ENCODE measurements at regions of chr9 and their contacts with region 1.

Region 1: GRCh38 chr9:37938121-37938891 is 34.4 kb upstream of the SLC25A51 start:
- DNase-seq: peak in 1 of 2 donors; percentile 45
- ATAC-seq: peak; percentile 48 to 75 (median 66)
- H3K4me3 ChIP-seq: peak overlapping the region in 2 of 10 donors; percentile 9 to 17
- H3K27ac ChIP-seq: peak overlapping the region in 9 of 10 donors; percentile 50 to 74 (median 60)
- H3K4me1 ChIP-seq: peaks cover 22 to 59% (median 47%) of the 10 kb centered on the region in 9 donors
- H3K27me3 ChIP-seq: no peaks in the 10 kb centered on the region
- CTCF ChIP-seq: no peak

Region 2: DNA sequence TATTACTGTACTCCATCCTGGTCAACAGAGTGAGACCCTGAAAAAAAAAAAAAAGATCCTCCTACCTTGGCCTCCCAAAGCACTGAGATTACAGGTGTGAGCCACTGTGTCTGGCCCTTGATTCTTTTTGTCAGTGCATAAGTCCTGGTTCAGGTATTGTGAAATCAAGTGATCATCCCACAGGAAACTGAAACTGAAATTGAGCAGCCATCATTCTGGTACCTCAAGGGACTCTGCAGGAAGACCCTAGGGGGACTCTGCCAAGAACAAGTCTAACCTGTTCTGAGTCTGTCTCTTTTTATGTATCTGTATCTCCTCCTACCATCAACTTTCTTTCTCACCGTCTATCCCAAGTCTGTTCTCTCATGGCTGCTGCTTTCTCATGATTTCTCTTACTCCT is 139.6 kb before region 1 on chr9:
- intact Hi-C with region 1: no loop called
- DNase-seq: no peak
- ATAC-seq: no peak
- H3K4me3 ChIP-seq: no peak overlapping the region
- H3K27ac ChIP-seq: no peak overlapping the region
- H3K4me1 ChIP-seq: peaks cover 8 to 36% (median 34%) of the 10 kb centered on the region in 9 donors
- H3K27me3 ChIP-seq: no peaks in the 10 kb centered on the region
- CTCF ChIP-seq: no peak

Region 3: GRCh38 chr9:37920471-37921167 is 17.7 kb before region 1 on chr9:
- intact Hi-C with region 1: loop called in 1 of 10 experiments (anchors 2 kb)
- DNase-seq: no peak
- ATAC-seq: no peak
- H3K4me3 ChIP-seq: no peak overlapping the region
- H3K27ac ChIP-seq: no peak overlapping the region
- H3K4me1 ChIP-seq: peaks cover 11 to 55% (median 23%) of the 10 kb centered on the region in 9 donors
- H3K27me3 ChIP-seq: no peaks in the 10 kb centered on the region
- CTCF ChIP-seq: no peak

Region 4: DNA sequence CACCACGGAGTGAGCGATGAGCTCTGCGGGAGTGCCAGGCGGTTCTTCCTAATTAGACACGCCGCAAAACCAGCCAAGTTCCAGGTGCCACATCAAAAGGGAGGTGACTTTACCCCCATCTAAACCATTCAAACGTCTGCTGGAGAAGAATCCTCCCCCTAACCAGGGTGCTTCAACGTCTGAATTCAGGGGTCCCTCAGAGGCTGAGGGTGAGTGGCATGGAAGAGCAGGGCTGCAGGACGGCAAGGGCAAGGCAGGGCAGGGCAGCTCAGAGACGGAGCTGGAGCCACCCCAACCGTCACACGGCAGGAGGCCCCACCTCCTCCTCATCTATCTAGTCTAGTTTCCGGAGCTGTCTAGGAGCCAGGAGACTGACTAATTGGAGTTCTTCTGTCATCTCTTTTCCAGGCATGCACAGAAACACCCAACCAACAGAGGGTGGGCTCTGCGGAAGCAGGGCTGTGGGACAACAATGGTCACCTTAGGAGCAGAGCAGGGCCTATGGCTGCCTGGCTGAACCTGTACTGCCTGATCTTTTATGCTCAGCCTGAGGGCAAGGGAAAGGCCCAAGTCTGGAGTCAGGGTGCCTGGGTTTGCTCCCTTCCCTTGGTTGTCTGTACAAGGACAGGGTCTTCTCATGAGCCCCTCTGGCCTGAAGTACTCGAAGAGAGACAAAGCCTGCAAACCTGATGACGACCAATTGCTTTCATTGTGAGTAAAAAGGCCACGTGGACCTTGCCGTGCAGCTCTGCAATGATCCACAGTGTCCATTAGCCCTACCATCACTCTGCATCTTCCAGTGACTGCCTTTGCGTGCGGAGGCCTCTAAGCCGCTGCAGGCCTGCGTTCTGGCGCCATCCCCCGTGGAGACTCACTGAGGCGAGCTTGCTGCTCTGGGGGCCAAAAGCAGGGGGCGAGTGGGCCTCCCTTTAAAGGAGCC is 46.6 kb after region 1 on chr9:
- intact Hi-C with region 1: loop called in 1 of 10 experiments (anchors 5 kb)
- DNase-seq: peak; percentile 43 to 67
- ATAC-seq: peak; percentile 74 to 88 (median 82)
- H3K4me3 ChIP-seq: no peak overlapping the region
- H3K27ac ChIP-seq: peak overlapping the region in 5 of 10 donors; percentile 18 to 77 (median 59)
- H3K4me1 ChIP-seq: peaks cover 18 to 72% (median 54%) of the 10 kb centered on the region in 9 donors
- H3K27me3 ChIP-seq: no peaks in the 10 kb centered on the region
- CTCF ChIP-seq: peak in 4 of 9 donors; percentile 9 to 37 (median 26)

Region 5: DNA sequence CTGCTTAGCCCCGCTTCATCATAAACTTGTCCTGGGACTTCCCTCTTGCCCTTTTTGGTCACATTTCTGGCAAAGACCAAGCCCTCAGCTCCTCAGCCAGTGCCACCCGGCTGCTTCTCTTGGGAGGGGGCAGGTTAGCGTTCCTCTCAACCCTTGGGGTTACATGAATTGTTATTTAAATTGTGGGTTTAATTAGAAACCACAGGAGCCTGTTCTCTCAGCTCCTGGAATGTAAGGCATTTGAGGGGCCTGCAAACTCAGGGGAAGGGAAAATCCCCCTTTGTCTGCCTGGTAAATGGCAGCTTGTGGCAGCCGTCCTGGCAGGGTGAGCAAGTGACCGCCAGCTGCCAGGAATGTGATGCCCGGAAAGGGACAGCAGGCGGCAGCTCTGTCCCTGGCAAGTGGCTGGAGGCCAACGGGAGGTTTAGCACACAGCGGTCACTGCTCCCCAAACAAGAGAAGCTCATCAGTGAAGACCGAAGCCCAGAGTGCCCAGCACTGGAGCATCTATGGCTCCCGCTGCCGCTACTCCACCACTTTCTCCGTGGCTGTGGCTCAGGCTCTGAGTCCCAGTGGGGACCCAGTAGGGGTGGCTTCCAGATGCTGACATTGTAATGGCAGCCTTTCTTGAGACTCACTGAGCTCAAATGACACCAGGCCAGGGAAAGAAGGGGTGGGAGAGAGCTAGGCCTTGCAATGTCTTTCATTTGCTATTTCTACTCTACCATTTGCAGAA is 79.0 kb after region 1 on chr9:
- intact Hi-C with region 1: loop called in 1 of 10 experiments (anchors 5 kb)
- DNase-seq: peak; percentile 68 to 73
- ATAC-seq: peak; percentile 63 to 87 (median 82)
- H3K4me3 ChIP-seq: no peak overlapping the region
- H3K27ac ChIP-seq: peak overlapping the region; percentile 12 to 88 (median 60)
- H3K4me1 ChIP-seq: peaks cover 33 to 79% (median 59%) of the 10 kb centered on the region in 9 donors
- H3K27me3 ChIP-seq: no peaks in the 10 kb centered on the region
- CTCF ChIP-seq: peak; percentile 27 to 61 (median 50)

Region 6: GRCh38 chr9:38141746-38142591 is 203.7 kb after region 1 on chr9:
- intact Hi-C with region 1: no loop called
- DNase-seq: no peak
- ATAC-seq: peak in 3 of 8 donors; percentile 20 to 47 (median 41)
- H3K4me3 ChIP-seq: no peak overlapping the region
- H3K27ac ChIP-seq: no peak overlapping the region
- H3K4me1 ChIP-seq: peaks cover 0 to 17% (median 8%) of the 10 kb centered on the region in 9 donors
- H3K27me3 ChIP-seq: peaks cover 0 to 23% (median 10%) of the 10 kb centered on the region in 7 donors
- CTCF ChIP-seq: no peak

Region 7: DNA sequence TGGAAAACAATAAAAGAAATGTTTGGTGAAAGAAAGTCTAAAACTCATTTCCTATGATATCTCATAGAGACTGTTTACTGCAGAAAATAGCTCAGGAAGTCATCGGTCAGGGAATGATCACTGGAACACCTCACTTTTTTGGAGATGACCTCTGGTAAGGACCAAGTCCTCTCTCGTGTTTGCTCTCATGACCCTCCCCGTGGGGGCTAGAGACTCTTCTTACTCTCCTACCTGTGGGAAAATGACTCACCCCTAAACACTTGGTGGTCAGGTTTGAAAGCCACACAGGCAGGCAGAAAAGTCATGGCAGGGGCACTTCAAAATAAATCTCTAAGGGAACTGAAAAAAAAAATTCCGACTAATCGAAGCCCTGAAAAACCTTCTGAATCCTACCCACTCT is 733.4 kb after region 1 on chr9:
- intact Hi-C with region 1: no loop called
- DNase-seq: no peak
- ATAC-seq: no peak
- H3K4me3 ChIP-seq: no peak overlapping the region
- H3K27ac ChIP-seq: peak overlapping the region in 3 of 10 donors; percentile 19 to 52 (median 38)
- H3K4me1 ChIP-seq: peaks cover 0 to 11% (median 6%) of the 10 kb centered on the region in 9 donors
- H3K27me3 ChIP-seq: no peaks in the 10 kb centered on the region
- CTCF ChIP-seq: no peak

Measured in heart right ventricle (tissue), 16 donors.